HEK293T (cell line): ENCODE measurements at regions of chr14 and their contacts with region 1.

Region 1: DNA sequence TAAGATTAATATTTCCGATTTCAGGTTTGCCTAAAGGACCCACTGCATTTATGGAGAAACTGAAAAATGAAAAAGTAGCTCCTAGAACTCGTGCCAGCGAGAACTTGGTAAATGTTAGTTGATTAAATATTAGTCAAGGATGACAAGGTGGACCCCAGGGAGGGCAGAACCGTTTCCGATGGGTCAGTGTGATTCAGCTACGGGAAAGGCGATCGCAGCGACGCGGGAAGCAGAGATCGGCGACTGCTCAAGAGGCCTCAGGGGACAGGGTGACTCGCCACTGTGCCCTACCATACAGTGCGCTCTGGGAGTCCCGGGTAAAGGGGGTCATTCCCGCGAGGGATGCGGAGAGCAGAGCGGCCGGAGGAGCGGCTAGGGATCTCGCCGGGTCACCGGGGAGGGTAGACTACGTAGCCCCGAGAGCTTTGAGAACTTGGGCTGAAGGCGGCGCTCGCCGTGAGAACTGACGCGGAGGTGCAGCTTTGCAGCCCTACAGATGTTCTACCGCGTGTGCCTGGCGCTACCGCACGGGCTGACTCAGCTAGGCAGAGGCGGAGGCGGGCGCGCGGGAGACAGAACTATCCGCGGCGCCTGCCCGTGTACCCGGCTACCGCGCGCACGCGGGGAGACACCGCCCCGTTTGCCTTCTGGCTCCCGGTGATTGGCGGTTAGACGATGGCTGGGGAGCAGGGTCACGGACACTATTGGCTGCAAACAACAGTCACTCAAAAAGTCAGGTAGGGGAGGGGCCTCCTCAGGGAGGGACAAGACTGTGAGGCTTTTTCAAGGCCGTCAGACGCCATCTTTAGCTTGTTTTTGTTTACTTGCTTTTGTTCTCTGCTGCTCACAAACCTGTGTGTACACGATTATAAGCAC is 3.2 kb downstream of the C14orf93 start:
- DNase-seq: peak; percentile 96

Region 2: GRCh38 chr14:22973217-22974032 is 33.4 kb before region 1 on chr14:
- CTCF ChIA-PET with region 1: interaction called, 5 read pairs
- POLR2A ChIA-PET with region 1: interaction called, 27 read pairs
- DNase-seq: peak; percentile 61

Region 3: GRCh38 chr14:22994762-22995275 is 12.0 kb before region 1 on chr14:
- CTCF ChIA-PET with region 1: interaction called, 37 read pairs
- POLR2A ChIA-PET with region 1: interaction called, 65 read pairs
- DNase-seq: peak; percentile 50

Region 4: GRCh38 chr14:23025151-23025814 is 18.5 kb after region 1 on chr14:
- CTCF ChIA-PET with region 1: no interaction called
- POLR2A ChIA-PET with region 1: interaction called, 36 read pairs
- DNase-seq: no peak

Region 5: DNA sequence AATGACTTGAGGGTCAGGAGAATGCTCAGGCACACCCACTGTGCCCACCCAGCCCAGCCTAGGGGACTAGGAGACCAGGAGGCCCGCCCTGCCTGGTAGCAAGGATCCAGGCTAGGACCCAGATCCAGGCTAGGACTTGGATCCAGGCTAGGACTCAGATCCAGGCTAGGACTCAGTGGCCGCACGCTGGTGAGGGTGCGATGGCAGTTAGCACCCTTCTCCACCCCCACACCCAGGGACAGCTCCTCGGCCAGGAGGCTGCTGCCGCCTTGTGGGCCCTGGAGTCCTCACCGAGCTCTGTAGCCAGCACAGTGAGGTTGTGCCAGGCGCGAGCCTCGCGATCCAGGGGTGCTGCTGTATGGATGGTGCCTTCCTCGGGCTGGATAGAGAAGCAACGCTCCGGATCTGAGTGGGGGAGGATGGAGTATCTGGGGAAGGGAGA is 45.4 kb after region 1 on chr14:
- CTCF ChIA-PET with region 1: interaction called, 15 read pairs
- POLR2A ChIA-PET with region 1: interaction called, 45 read pairs
- DNase-seq: no peak

Region 6: DNA sequence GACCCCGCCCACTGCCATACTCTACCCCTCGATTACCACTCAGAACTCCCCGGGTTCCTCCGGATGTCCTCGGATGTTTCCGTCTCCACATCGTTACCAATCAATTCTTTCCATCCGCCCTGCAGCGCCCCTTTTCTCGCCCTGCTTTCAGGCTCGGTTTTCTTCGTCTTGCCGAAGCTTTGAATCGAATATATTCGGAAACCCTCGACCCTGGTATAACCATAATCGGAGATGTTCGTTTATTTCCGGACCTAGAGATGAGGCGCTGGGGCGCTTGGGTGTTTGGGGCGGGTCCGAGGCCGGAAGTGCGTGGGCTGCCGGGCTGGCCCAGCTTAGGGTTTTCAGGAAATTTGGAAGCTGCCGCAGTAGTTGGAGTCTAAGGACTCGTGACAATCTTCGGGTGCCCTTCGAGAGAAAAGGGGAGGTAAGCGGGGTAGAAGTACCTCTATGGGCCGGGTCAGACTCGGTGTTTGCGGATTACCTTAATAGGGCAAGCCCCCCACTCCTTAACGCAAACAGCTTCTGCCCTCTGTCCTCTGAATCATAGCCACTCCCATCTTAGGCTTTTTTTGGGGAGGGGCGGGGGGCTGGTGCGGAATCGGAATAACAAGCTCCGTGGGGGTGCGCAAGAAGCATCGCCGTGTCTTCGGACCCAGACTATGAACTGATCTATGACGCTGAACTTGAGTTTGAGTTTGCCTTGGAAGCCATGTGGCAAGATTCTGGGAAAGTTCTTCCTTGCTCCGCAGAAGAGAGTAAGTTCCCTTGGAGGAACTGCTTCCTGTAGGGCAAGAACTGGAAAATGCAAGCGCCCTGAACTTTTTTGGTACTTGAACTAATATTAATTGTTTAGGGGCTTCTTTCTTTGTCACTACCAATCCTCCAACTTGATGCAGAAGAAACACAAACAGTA is 88.7 kb after region 1 on chr14 and contains the start of gene C14orf119:
- CTCF ChIA-PET with region 1: no interaction called
- POLR2A ChIA-PET with region 1: interaction called, 17 read pairs
- DNase-seq: peak; percentile 99